Activated CD8-positive, alpha-beta T cell treated with anti-CD3 and anti-CD28 coated beads for 36 hours (primary cell): ENCODE measurements at regions of chr12 and their contacts with region 1.

Region 1: DNA sequence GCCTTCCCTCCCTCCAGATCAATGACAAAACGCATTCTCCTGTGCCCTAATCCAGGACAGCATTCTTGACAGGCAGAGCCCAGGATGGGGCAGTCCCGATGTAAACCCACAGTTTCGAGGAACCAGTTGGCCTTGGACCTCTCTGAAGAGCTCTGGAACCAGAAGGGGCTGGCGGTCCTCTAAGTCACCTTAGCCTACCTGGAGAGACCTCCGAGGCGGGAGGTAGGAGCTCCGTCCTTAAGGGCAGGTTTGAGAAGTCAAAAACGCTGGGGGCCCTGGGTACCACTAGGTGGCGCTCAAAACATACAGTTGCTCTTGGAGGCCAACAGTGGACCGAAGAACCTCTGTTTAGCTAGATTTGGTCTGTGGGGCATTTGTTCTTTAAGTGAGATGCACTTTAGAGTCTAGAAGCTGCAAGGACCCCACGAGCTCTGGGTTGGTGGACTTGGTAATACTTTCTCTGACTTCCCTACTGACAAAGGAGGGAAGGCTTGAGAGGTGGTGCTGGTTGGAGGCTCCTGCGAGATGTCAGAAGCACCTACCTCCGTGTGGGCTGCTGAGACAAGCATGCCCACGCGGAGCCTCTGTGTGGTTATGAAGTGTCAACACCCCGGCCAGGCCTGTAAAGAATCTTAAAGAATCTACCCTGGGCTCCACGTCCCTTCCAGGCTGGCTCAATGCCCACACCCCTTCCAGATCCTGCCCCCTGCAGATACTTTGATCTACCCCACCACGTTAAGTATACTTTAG is 74.8 kb upstream of the CHST11 start:
- DNase-seq: peak; percentile 91
- ATAC-seq: peak; percentile 84
- H3K4me3 Mint-ChIP-seq: no peak overlapping the region
- H3K27ac Mint-ChIP-seq: no peak overlapping the region
- H3K4me1 Mint-ChIP-seq: peaks cover 10% of the 10 kb centered on the region
- H3K27me3 Mint-ChIP-seq: peaks cover 5% of the 10 kb centered on the region
- CTCF ChIP-seq: peak; percentile 86

Region 2: GRCh38 chr12:103779428-103780092 is 602.3 kb before region 1 on chr12:
- CTCF ChIA-PET with region 1: no interaction called
- POLR2A ChIA-PET with region 1: no interaction called
- intact Hi-C with region 1: no loop called
- DNase-seq: no peak
- ATAC-seq: no peak
- H3K4me3 Mint-ChIP-seq: no peak overlapping the region
- H3K27ac Mint-ChIP-seq: no peak overlapping the region
- H3K4me1 Mint-ChIP-seq: no peaks in the 10 kb centered on the region
- H3K27me3 Mint-ChIP-seq: no peaks in the 10 kb centered on the region
- CTCF ChIP-seq: no peak

Region 3: DNA sequence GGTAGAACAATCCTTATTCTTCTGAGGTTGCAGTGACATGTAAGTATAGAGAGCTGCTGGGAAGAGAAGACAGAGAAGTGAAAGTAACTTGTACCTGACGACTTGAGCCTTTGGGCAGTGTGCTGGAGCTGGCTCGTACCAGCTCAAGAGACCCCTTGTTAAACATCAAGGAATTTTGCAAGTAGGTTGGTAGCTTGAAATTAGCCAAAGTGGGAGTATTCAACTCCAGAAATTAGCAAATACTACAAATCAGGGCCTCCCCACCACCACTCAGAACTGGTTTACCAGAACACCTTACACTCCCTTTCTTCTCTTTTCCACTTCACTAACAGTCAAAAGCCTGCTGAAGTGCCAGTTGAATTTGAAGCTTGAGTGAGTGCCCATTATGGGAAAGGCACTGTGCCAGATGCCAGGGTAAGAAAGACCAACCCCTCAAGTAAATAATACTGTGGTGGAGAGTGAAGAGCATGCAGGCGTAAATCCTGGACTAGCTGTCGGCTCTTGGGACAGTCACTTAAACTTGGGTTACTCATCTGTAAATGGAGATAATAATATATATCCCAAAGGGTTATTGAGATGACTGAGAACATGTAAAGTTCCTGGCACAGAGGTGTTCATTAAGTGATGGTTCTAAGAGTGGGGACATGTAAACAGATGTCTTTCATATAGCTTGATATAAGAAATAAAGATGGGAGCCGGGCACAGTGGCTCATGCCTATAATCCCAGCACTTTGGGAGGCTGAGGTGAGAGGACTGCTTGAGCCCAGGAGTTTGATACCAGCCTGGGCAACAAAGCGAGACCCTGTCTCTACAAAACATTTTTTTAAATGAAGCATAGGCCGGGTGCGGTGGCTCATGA is 105.4 kb before region 1 on chr12:
- CTCF ChIA-PET with region 1: no interaction called
- POLR2A ChIA-PET with region 1: no interaction called
- intact Hi-C with region 1: no loop called
- DNase-seq: no peak
- ATAC-seq: no peak
- H3K4me3 Mint-ChIP-seq: peak overlapping the region; percentile 13
- H3K27ac Mint-ChIP-seq: peak overlapping the region; percentile 58
- H3K4me1 Mint-ChIP-seq: peaks cover 7% of the 10 kb centered on the region
- H3K27me3 Mint-ChIP-seq: no peaks in the 10 kb centered on the region
- CTCF ChIP-seq: no peak

Region 4: GRCh38 chr12:104371043-104371870 is 10.6 kb before region 1 on chr12:
- CTCF ChIA-PET with region 1: interaction called, 21 read pairs
- POLR2A ChIA-PET with region 1: no interaction called
- intact Hi-C with region 1: no loop called
- DNase-seq: no peak
- ATAC-seq: no peak
- H3K4me3 Mint-ChIP-seq: no peak overlapping the region
- H3K27ac Mint-ChIP-seq: no peak overlapping the region
- H3K4me1 Mint-ChIP-seq: peaks cover 13% of the 10 kb centered on the region
- H3K27me3 Mint-ChIP-seq: no peaks in the 10 kb centered on the region
- CTCF ChIP-seq: no peak

Region 5: DNA sequence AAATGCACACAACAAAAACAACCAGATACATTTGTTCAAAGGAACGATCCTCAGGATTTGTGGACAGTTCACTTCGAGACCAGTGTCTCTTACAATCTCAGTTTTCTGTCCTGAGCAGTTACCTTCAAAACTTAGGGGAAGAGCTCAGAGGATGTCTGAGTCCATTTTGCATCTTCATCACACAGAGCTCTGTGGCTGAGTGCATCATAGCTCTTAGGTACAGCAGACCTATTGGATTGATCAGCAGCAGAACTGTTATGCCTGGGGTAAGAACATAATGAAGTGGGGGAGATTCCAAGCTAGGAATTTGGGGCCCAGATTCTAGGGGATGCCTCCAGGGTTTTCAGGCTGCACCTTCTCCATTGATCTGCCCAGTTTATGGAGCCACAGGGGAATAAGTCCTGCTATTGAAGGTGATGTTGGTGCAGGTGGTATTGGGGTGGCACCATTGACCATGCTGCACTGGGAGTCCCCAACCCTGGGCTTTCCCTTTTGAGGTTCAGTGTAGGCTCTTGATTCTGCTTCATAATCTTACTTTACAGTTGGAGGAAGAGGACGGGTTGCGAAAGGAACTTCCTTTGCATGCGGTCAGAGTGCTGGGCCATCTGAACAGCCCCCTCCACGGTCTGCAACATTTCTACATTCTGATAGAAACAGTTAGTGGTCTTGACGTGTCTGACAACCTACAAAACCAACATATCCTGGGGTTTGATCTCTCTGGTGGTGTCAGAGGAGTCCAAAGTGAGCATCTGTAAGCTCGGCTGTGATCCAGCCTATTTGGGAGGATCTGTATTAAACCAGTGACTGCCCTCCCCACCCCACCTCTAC is 187.7 kb after region 1 on chr12:
- CTCF ChIA-PET with region 1: interaction called, 14 read pairs
- POLR2A ChIA-PET with region 1: no interaction called
- intact Hi-C with region 1: no loop called
- DNase-seq: peak; percentile 86
- ATAC-seq: peak; percentile 83
- H3K4me3 Mint-ChIP-seq: peak overlapping the region; percentile 54
- H3K27ac Mint-ChIP-seq: peak overlapping the region; percentile 81
- H3K4me1 Mint-ChIP-seq: peaks cover 53% of the 10 kb centered on the region
- H3K27me3 Mint-ChIP-seq: no peaks in the 10 kb centered on the region
- CTCF ChIP-seq: no peak

Region 6: DNA sequence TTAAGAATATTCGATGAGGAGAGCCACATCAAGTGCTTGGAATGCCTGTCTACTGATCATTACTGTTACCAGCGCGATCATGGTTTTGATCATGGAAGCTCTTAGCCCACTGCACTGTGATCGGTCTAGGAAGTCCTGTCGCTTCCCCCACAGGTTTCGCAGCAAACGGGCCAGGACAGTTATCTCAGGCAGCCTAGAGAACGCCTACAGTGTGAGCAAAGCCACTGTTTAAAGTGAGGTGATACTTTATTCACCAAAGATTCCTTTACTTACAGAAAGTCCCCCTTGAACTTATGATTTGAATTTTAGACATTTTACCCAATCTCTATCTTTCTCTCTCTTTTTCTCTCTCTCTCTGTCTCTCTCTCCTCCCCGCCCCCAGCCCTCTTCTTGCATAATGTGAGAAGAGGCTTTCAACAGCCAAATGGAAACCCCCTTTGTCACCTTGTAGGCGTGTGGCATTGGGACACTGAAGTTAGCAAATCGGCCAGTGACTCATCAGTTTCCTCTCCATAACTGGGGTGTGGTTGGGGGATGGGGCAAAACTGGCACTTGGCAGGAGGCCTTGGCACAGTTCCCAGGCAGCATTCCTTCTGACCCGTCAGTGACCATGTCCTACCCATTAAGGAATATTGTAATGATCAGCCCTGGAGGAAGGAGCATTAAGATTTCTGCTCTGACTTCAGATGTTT is 289.6 kb after region 1 on chr12:
- CTCF ChIA-PET with region 1: interaction called, 13 read pairs
- POLR2A ChIA-PET with region 1: no interaction called
- intact Hi-C with region 1: loop called (anchors 10 kb)
- DNase-seq: peak; percentile 98
- ATAC-seq: peak; percentile 80
- H3K4me3 Mint-ChIP-seq: peak overlapping the region; percentile 70
- H3K27ac Mint-ChIP-seq: peak overlapping the region; percentile 97
- H3K4me1 Mint-ChIP-seq: peaks cover 60% of the 10 kb centered on the region
- H3K27me3 Mint-ChIP-seq: no peaks in the 10 kb centered on the region
- CTCF ChIP-seq: no peak

Region 7: GRCh38 chr12:104834607-104835006 is 452.7 kb after region 1 on chr12:
- CTCF ChIA-PET with region 1: interaction called, 25 read pairs
- POLR2A ChIA-PET with region 1: interaction called, 3 read pairs
- intact Hi-C with region 1: loop called (anchors 5 kb)
- DNase-seq: no peak
- ATAC-seq: no peak
- H3K4me3 Mint-ChIP-seq: no peak overlapping the region
- H3K27ac Mint-ChIP-seq: no peak overlapping the region
- H3K4me1 Mint-ChIP-seq: no peaks in the 10 kb centered on the region
- H3K27me3 Mint-ChIP-seq: no peaks in the 10 kb centered on the region
- CTCF ChIP-seq: no peak

Region 8: DNA sequence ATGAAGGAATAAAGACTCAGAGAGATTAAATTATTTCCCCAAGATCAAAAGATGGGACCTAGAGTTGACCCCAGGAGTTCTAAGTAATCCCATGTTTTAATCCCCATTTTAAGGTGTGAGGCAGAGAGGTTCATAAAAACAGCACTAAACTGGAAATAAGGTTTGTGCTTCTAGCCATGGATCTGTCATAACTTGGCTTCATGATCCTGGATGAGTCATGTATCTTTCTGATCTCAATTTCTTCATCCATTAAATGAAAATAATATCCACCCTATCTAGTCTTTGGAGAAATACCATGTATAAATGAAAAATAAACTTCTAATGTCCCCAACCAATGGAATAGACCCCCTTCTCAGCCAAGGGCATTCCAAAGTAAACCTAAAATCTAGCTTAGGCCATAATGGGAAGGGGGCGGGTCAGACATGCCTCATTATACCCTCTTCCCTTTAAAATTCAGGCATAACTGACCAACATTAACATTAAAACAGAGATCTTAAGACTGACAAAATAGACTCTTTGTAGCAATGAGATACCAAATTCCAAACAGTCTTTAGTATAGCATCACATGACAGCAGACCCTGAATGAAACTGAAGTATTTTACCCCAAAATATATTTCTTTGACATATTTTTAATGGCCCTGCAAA is 528.4 kb after region 1 on chr12:
- CTCF ChIA-PET with region 1: no interaction called
- POLR2A ChIA-PET with region 1: no interaction called
- intact Hi-C with region 1: no loop called
- DNase-seq: no peak
- ATAC-seq: no peak
- H3K4me3 Mint-ChIP-seq: no peak overlapping the region
- H3K27ac Mint-ChIP-seq: no peak overlapping the region
- H3K4me1 Mint-ChIP-seq: no peaks in the 10 kb centered on the region
- H3K27me3 Mint-ChIP-seq: no peaks in the 10 kb centered on the region
- CTCF ChIP-seq: no peak

Region 9: GRCh38 chr12:105053116-105053572 is 671.2 kb after region 1 on chr12:
- CTCF ChIA-PET with region 1: interaction called, 31 read pairs
- POLR2A ChIA-PET with region 1: no interaction called
- intact Hi-C with region 1: loop called (anchors 5 kb)
- DNase-seq: peak; percentile 89
- ATAC-seq: peak; percentile 87
- H3K4me3 Mint-ChIP-seq: no peak overlapping the region
- H3K27ac Mint-ChIP-seq: no peak overlapping the region
- H3K4me1 Mint-ChIP-seq: peaks cover 2% of the 10 kb centered on the region
- H3K27me3 Mint-ChIP-seq: no peaks in the 10 kb centered on the region
- CTCF ChIP-seq: peak; percentile 91